ENCODE measurements at regions of chr20 and their contacts with region 1.

Region 1: DNA sequence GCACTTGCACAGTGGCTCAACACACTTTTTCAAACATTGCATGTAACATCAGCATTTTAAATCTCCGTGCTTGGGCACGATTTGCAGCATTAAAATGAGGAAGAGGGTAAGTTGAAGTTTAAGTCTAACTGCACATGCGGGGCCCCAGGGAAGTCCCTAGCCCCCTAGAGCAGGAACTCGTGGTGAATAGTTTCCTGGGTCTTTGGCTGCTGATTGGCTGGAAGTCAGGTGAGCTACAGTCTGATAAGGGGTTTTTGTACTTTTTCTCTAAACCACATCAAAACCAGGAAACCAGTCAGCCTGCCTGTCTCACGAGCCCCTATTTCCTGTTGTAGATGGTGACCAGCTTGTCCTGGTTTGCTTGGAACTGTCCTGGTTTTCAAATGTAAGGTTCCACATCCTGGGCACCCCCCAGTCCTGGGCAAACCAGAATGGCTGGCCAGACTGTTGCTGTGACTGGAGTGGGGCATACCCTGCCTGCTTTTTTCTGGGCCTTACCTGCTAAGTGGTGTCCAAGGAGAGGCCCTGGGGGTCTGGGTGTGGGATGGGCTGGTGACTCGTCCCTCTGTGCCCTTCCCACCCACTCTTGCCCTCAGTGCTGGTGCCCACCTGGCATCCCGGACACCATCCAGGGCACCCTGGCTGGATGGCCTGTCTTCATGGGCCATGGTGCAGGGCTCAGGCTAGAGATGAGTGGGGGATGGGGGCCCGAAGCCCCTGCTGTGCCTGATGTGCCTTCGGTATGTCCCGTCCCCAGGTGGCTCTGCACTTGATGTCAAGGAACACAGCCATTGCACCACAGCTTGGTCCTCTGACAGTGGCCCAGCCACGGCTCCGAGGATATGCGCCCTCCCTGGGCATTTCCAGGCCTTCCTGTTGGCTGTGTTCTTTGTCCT is 31.8 kb downstream of the SUN5 start:
- DNase-seq: peak; percentile 66 to 97 (median 83)
- ATAC-seq: peak; percentile 69
- H3K4me3 ChIP-seq: peak overlapping the region; percentile 12 to 42
- H3K4me3 Mint-ChIP-seq: no peak overlapping the region
- H3K27ac ChIP-seq: peak overlapping the region; percentile 73 to 95
- H3K27ac Mint-ChIP-seq: no peak overlapping the region
- H3K4me1 ChIP-seq: peaks cover 87% of the 10 kb centered on the region
- H3K4me1 Mint-ChIP-seq: peaks cover 45% of the 10 kb centered on the region
- H3K27me3 ChIP-seq: no peaks in the 10 kb centered on the region
- H3K27me3 Mint-ChIP-seq: no peaks in the 10 kb centered on the region
- CTCF ChIP-seq: no peak

Region 2: DNA sequence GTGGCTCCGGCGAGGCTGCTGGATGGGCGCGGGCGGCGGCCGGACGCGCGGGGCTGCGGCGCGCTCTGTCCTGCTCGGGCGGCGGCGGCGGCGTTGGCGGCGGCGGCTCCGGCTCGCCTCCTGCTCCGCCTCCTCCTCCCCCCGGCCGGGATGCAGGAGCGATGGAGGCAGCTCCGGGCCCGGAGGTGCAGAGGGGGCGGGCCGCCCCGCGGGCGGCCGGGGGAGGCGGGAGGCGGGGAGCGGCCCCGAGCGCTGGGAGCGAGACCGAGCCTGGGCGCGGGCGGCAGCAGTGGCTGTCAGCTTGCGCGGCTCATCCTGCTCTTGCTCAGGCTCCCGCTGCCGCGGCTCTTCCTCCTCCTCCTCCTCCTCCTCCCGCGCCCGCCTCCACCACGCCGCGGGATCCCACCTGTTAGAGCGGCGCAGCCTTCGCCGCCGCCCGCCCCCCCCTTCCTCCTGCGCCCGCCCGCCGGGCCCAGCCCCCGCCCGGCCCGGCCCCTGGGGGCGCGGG is 387.4 kb before region 1 on chr20 and contains the start of gene NOL4L:
- CTCF ChIA-PET with region 1: no interaction called
- POLR2A ChIA-PET with region 1: no interaction called
- intact Hi-C with region 1: loop called in 1 of 2 experiments (anchors 10 kb)
- DNase-seq: peak in 8 of 9 experiments; percentile 24 to 70 (median 52)
- ATAC-seq: peak; percentile 25
- H3K4me3 ChIP-seq: peak within 1 kb of the TSS; percentile 59 to 74
- H3K4me3 Mint-ChIP-seq: peak within 1 kb of the TSS; percentile 93
- H3K27ac ChIP-seq: no peak within 1 kb of the TSS
- H3K27ac Mint-ChIP-seq: peak within 1 kb of the TSS; percentile 90
- H3K4me1 ChIP-seq: peaks cover 33% of the 10 kb centered on the region
- H3K4me1 Mint-ChIP-seq: peaks cover 42% of the 10 kb centered on the region
- H3K27me3 ChIP-seq: no peaks in the 10 kb centered on the region
- H3K27me3 Mint-ChIP-seq: no peaks in the 10 kb centered on the region
- CTCF ChIP-seq: no peak
- total RNA-seq, gene NOL4L: 39.1 to 39.7 TPM

Region 3: DNA sequence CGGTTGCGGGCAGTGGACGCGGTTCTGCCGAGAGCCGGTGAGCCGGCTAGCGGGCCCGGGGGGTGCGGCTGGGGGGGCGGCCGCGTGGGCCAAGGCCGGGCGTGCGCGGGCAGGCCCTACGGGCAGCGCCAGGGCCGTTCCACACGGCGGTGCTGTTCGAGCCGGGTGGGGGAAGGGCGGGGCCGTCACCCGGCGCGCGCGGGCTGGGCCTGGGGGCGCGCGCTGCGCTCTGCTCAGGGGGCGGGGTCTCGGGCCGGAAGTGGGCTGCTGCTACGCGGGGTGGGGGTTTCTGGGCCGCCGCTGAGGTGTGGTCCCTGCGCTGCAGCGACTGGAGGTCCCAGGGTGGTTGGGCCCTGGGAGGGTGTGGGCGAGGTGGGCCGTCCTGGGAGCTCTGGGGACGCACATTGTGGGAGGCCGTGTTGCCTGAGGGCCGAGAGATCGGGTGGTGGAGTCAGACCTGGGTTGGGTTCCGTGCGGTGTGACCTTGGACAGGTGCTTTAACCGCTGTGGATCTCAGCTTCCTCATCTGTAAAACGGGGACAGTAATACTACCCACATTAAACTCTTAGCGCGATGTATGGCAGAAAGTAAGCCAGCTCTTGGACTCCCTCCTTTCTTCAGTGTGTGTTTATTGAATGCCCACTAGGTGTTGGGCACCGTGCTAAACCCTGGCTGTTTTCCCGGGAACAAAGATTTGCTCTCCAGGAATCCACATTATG is 152.3 kb before region 1 on chr20:
- CTCF ChIA-PET with region 1: no interaction called
- POLR2A ChIA-PET with region 1: interaction called, 4 read pairs
- intact Hi-C with region 1: loop called in 1 of 2 experiments (anchors 5 kb)
- DNase-seq: peak in 8 of 9 experiments; percentile 78 to 92 (median 86)
- ATAC-seq: peak; percentile 76
- H3K4me3 ChIP-seq: peak overlapping the region; percentile 71 to 72
- H3K4me3 Mint-ChIP-seq: peak overlapping the region; percentile 97
- H3K27ac ChIP-seq: peak overlapping the region; percentile 88 to 93
- H3K27ac Mint-ChIP-seq: peak overlapping the region; percentile 98
- H3K4me1 ChIP-seq: peaks cover 41% of the 10 kb centered on the region
- H3K4me1 Mint-ChIP-seq: peaks cover 42% of the 10 kb centered on the region
- H3K27me3 ChIP-seq: no peaks in the 10 kb centered on the region
- H3K27me3 Mint-ChIP-seq: no peaks in the 10 kb centered on the region
- CTCF ChIP-seq: no peak

Region 4: GRCh38 chr20:32982617-32983458 is 10.4 kb after region 1 on chr20:
- CTCF ChIA-PET with region 1: interaction called, 5 read pairs
- POLR2A ChIA-PET with region 1: interaction called, 11 read pairs
- intact Hi-C with region 1: no loop called
- DNase-seq: no peak
- ATAC-seq: no peak
- H3K4me3 ChIP-seq: no peak overlapping the region
- H3K4me3 Mint-ChIP-seq: no peak overlapping the region
- H3K27ac ChIP-seq: no peak overlapping the region
- H3K27ac Mint-ChIP-seq: no peak overlapping the region
- H3K4me1 ChIP-seq: no peaks in the 10 kb centered on the region
- H3K4me1 Mint-ChIP-seq: peaks cover 25% of the 10 kb centered on the region
- H3K27me3 ChIP-seq: no peaks in the 10 kb centered on the region
- H3K27me3 Mint-ChIP-seq: no peaks in the 10 kb centered on the region
- CTCF ChIP-seq: no peak

Region 5: GRCh38 chr20:33005132-33005566 is 32.7 kb after region 1 on chr20:
- CTCF ChIA-PET with region 1: interaction called, 17 read pairs
- POLR2A ChIA-PET with region 1: no interaction called
- intact Hi-C with region 1: loop called (anchors 5 kb)
- DNase-seq: peak in 3 of 9 experiments; percentile 38 to 69 (median 58)
- ATAC-seq: no peak
- H3K4me3 ChIP-seq: no peak overlapping the region
- H3K4me3 Mint-ChIP-seq: no peak overlapping the region
- H3K27ac ChIP-seq: no peak overlapping the region
- H3K27ac Mint-ChIP-seq: no peak overlapping the region
- H3K4me1 ChIP-seq: peaks cover 11% of the 10 kb centered on the region
- H3K4me1 Mint-ChIP-seq: peaks cover 27% of the 10 kb centered on the region
- H3K27me3 ChIP-seq: no peaks in the 10 kb centered on the region
- H3K27me3 Mint-ChIP-seq: no peaks in the 10 kb centered on the region
- CTCF ChIP-seq: peak; percentile 64

Region 6: DNA sequence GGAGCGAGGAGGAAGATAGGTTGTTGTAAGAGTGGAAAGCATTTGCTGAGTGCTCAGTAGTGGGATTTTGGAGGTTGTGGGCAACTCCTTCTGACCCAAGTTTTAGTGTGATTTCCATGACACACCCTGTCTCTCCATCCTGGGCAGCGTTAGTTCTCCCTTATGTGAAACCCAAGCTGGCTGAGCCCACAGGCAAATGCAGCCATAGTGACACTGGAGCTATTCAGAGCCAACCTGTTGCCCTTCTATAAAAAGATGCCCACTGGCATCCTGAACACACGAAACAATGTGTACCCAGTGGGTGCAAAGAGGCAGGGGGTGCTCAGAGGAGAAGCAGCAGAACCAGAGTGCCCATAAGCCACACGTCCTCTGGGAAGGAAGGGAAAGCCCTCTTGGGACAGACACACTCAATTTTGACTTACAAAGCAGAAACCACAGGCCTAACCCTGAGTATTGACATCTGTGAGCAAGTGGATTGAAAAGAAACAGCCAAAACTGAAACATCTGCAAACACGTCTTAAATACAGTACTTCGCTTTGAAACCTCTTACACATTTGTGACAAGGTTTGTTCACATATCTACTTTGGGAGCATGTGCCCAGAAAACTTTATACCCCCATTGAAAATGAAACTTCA is 365.2 kb after region 1 on chr20:
- CTCF ChIA-PET with region 1: no interaction called
- POLR2A ChIA-PET with region 1: no interaction called
- intact Hi-C with region 1: no loop called
- DNase-seq: no peak
- ATAC-seq: no peak
- H3K4me3 ChIP-seq: no peak overlapping the region
- H3K4me3 Mint-ChIP-seq: no peak overlapping the region
- H3K27ac ChIP-seq: no peak overlapping the region
- H3K27ac Mint-ChIP-seq: no peak overlapping the region
- H3K4me1 ChIP-seq: no peaks in the 10 kb centered on the region
- H3K4me1 Mint-ChIP-seq: no peaks in the 10 kb centered on the region
- H3K27me3 ChIP-seq: no peaks in the 10 kb centered on the region
- H3K27me3 Mint-ChIP-seq: peaks cover 4% of the 10 kb centered on the region
- CTCF ChIP-seq: no peak

Measured in CD8-positive, alpha-beta T cell (primary cell).